SK-N-SH (cell line): ENCODE measurements at regions of chr3 and their contacts with region 1.

Region 1: GRCh38 chr3:134473868-134474546 is 11.8 kb downstream of the ANAPC13 start:
- DNase-seq: peak; percentile 44
- H3K4me3 ChIP-seq: no peak overlapping the region; a peak in 1 of 4 replicates
- H3K27ac ChIP-seq: peak overlapping the region in 1 of 2 experiments; percentile 58; a peak in 1 of 4 replicates
- H3K4me1 ChIP-seq: peaks cover 0 to 9% of the 10 kb centered on the region in 2 experiments; a peak in 3 of 4 replicates
- H3K27me3 ChIP-seq: no peaks in the 10 kb centered on the region
- CTCF ChIP-seq: peak; percentile 81
- EP300 ChIP-seq: no peak
- RAD21 ChIP-seq: peak; percentile 90

Region 2: GRCh38 chr3:133734305-133734704 is 739.7 kb before region 1 on chr3:
- CTCF ChIA-PET with region 1: no interaction called
- POLR2A ChIA-PET with region 1: no interaction called
- DNase-seq: no peak
- H3K4me3 ChIP-seq: no peak overlapping the region
- H3K27ac ChIP-seq: no peak overlapping the region
- H3K4me1 ChIP-seq: no peaks in the 10 kb centered on the region
- H3K27me3 ChIP-seq: no peaks in the 10 kb centered on the region; the same call in 1 of the 2 replicates
- CTCF ChIP-seq: no peak
- EP300 ChIP-seq: no peak
- RAD21 ChIP-seq: no peak

Region 3: GRCh38 chr3:134197681-134198261 is 276.2 kb before region 1 on chr3:
- CTCF ChIA-PET with region 1: interaction called, 10 read pairs
- POLR2A ChIA-PET with region 1: no interaction called
- DNase-seq: peak; percentile 48
- H3K4me3 ChIP-seq: no peak overlapping the region; a peak in 1 of 4 replicates
- H3K27ac ChIP-seq: no peak overlapping the region
- H3K4me1 ChIP-seq: peaks cover 0 to 13% of the 10 kb centered on the region in 2 experiments; a peak in 1 of 4 replicates
- H3K27me3 ChIP-seq: no peaks in the 10 kb centered on the region
- CTCF ChIP-seq: peak; percentile 83
- EP300 ChIP-seq: no peak
- RAD21 ChIP-seq: peak; percentile 73

Region 4: DNA sequence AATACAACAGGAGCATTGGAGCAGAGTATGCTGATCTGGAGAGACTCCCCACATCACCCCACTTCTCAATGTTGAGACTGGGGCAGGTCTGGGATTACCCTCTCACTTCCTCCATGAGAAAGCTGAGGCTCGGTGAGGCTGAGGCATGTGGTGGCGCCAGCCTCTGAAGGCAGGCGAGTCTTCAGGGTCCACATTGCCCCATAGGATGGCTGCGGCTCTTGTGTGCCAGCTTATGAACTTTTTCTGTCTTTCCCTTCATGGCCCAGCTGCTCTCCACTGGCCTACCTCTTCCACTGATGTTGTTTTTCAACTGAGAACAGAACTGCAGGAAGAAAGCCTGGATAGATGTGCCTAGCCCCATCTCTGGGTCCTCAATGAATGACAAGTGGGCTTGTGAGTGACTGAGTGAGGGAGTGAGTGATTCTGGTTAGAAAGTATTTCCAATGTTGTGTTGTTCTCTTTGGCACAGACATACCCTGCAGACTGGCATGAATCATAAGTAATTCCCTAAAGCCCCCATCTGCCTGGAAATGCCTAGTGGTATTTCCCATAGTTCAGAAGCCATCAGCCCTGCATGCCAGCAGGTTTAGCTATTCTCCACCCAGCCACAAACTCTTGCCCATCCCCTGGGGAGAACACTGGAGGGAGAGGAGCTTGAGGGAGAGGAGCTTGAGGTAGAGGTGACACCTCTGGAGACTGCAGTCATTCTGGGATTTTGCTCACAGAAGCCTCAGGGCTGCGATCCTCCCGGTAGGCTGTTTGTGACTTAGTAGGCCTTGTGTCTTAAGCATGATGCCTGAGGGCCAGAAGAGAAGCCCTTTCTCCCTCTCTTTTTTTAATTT is 156.7 kb before region 1 on chr3:
- CTCF ChIA-PET with region 1: interaction called, 375 read pairs
- POLR2A ChIA-PET with region 1: no interaction called
- DNase-seq: no peak
- H3K4me3 ChIP-seq: no peak overlapping the region
- H3K27ac ChIP-seq: peak overlapping the region in 1 of 2 experiments; percentile 68; a peak in 2 of 4 replicates
- H3K4me1 ChIP-seq: peaks cover 0 to 12% of the 10 kb centered on the region in 2 experiments; a peak in 1 of 4 replicates
- H3K27me3 ChIP-seq: no peaks in the 10 kb centered on the region
- CTCF ChIP-seq: no peak
- EP300 ChIP-seq: peak in 1 of 2 experiments; percentile 66; a peak in 1 of 4 replicates
- RAD21 ChIP-seq: no peak

Region 5: DNA sequence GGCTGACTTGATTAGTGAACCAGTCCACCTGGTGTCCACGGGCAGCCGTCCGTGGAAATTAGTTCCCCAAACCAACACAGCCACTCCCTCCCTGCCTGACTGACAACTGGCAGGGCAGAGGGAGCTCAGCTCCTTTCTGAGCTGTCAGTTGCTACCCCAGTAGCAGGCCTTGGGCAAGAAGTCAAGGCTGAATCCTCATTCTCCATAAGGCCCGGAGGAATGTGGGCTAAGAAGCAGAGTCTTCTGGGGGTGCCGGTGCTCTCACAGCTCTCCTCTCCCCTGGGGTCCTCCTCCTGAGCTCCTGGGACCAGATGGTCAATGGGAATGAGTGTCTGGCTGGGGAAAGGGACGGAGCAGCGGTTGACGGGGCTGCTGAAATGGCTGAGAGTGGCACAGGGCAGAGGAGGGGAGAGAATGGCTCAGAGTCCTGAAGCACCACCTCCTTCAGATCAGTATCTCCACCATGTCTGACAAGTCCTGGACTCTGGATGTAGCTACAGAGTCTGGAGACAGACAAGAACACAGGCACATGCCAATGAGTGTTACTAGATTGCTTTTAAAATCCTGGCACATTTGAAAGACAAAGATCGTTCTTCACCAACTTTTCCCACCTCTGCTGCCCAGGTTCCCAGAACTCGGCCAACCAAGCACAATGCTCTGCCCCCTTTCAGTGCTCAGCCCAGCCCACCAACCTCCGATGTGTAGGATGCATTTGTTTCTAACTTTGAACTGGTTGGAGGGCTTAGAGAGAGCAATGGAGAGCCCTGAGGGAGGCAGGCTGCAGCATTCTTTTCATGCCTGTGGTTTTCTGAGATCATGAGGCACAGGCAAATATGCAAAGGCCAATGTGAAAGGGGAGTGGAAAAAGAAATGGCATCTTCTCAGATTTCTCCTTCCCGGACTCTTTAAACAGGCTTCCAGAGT is 116.5 kb before region 1 on chr3:
- CTCF ChIA-PET with region 1: interaction called, 16 read pairs
- POLR2A ChIA-PET with region 1: no interaction called
- DNase-seq: no peak
- H3K4me3 ChIP-seq: no peak overlapping the region
- H3K27ac ChIP-seq: peak overlapping the region; percentile 89 to 99
- H3K4me1 ChIP-seq: peaks cover 10 to 63% of the 10 kb centered on the region in 2 experiments; a peak in 3 of 4 replicates
- H3K27me3 ChIP-seq: no peaks in the 10 kb centered on the region
- CTCF ChIP-seq: no peak
- EP300 ChIP-seq: peak in 1 of 2 experiments; percentile 93; a peak in 2 of 4 replicates
- RAD21 ChIP-seq: no peak

Region 6: GRCh38 chr3:134406331-134407238 is 67.4 kb before region 1 on chr3:
- CTCF ChIA-PET with region 1: no interaction called
- POLR2A ChIA-PET with region 1: no interaction called
- DNase-seq: peak; percentile 82
- H3K4me3 ChIP-seq: peak overlapping the region in 1 of 2 experiments; percentile 28; a peak in 2 of 4 replicates
- H3K27ac ChIP-seq: peak overlapping the region in 1 of 2 experiments; percentile 39; a peak in 2 of 4 replicates
- H3K4me1 ChIP-seq: peaks cover 0 to 10% of the 10 kb centered on the region in 2 experiments; a peak in 1 of 4 replicates
- H3K27me3 ChIP-seq: no peaks in the 10 kb centered on the region; the same call in 1 of the 2 replicates
- CTCF ChIP-seq: no peak
- EP300 ChIP-seq: no peak
- RAD21 ChIP-seq: no peak

Region 7: GRCh38 chr3:134453631-134454030 is 20.4 kb before region 1 on chr3:
- CTCF ChIA-PET with region 1: interaction called, 13 read pairs
- POLR2A ChIA-PET with region 1: no interaction called
- DNase-seq: peak; percentile 20
- H3K4me3 ChIP-seq: no peak overlapping the region
- H3K27ac ChIP-seq: no peak overlapping the region
- H3K4me1 ChIP-seq: peaks cover 0 to 3% of the 10 kb centered on the region in 2 experiments; a peak in 1 of 4 replicates
- H3K27me3 ChIP-seq: no peaks in the 10 kb centered on the region
- CTCF ChIP-seq: peak; percentile 30; the same call in 1 of the 2 replicates
- EP300 ChIP-seq: no peak
- RAD21 ChIP-seq: peak; percentile 23; the same call in 1 of the 2 replicates

Region 8: GRCh38 chr3:134485718-134486576 is 11.9 kb after region 1 on chr3 and contains the starts of genes ANAPC13 and CEP63:
- CTCF ChIA-PET with region 1: interaction called, 32 read pairs
- POLR2A ChIA-PET with region 1: no interaction called
- DNase-seq: peak; percentile 92
- H3K4me3 ChIP-seq: peak within 1 kb of the TSS; percentile 85 to 96
- H3K27ac ChIP-seq: peak within 1 kb of the TSS; percentile 95 to 98
- H3K4me1 ChIP-seq: peaks cover 12 to 33% of the 10 kb centered on the region in 2 experiments
- H3K27me3 ChIP-seq: no peaks in the 10 kb centered on the region
- CTCF ChIP-seq: no peak
- EP300 ChIP-seq: peak; percentile 5 to 50; a peak in 1 of 4 replicates
- RAD21 ChIP-seq: no peak
- polyA plus RNA-seq, gene ANAPC13: 63.5 and 76.4 TPM in 2 replicates
- polyA plus RNA-seq, gene CEP63: 6.0 and 6.3 TPM in 2 replicates

Region 9: GRCh38 chr3:135458541-135459322 is 984.7 kb after region 1 on chr3:
- CTCF ChIA-PET with region 1: no interaction called
- POLR2A ChIA-PET with region 1: no interaction called
- DNase-seq: no peak
- H3K4me3 ChIP-seq: no peak overlapping the region
- H3K27ac ChIP-seq: no peak overlapping the region
- H3K4me1 ChIP-seq: no peaks in the 10 kb centered on the region
- H3K27me3 ChIP-seq: no peaks in the 10 kb centered on the region
- CTCF ChIP-seq: no peak
- EP300 ChIP-seq: no peak
- RAD21 ChIP-seq: no peak